ENCODE measurements at regions of chr21 and their contacts with region 1.

Region 1: DNA sequence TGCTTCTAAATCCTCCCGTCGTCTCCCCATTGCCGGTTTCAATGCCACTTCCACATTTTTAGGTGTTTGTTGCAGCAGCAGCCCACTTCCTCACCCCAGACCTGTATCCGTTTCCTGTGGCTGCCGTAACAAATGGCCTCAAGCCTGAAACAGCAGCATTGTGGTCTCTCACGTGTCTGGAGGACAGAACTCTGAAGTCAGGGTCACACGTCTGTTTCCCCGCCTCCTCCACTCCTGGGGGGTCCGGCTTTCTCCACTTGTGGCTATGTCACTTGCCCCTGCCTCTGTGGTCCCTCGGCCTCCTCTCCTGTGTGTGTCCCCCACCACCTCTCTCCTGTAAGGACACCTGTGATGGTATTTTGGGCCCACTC is 21.8 kb downstream of the TRPM2 start:
- DNase-seq: no peak
- ATAC-seq: no peak
- H3K4me3 ChIP-seq: no peak overlapping the region
- H3K27ac ChIP-seq: no peak overlapping the region
- H3K4me1 ChIP-seq: peaks cover 7% of the 10 kb centered on the region
- H3K27me3 ChIP-seq: peaks cover 16 to 46% of the 10 kb centered on the region in 2 experiments
- CTCF ChIP-seq: no peak
- EP300 ChIP-seq: no peak
- POLR2A ChIP-seq: no peak
- RAD21 ChIP-seq: no peak

Region 2: GRCh38 chr21:44428281-44428942 is 53.1 kb after region 1 on chr21:
- CTCF ChIA-PET with region 1: no interaction called
- POLR2A ChIA-PET with region 1: no interaction called
- in situ Hi-C with region 1: loop called (anchors 5 kb)
- intact Hi-C with region 1: no loop called
- DNase-seq: peak; percentile 26
- ATAC-seq: no peak; the same call in 2 of the 3 replicates
- H3K4me3 ChIP-seq: no peak overlapping the region
- H3K27ac ChIP-seq: no peak overlapping the region
- H3K4me1 ChIP-seq: no peaks in the 10 kb centered on the region
- H3K27me3 ChIP-seq: peaks cover 3 to 24% of the 10 kb centered on the region in 2 experiments; a peak in 3 of 5 replicates
- CTCF ChIP-seq: no peak
- EP300 ChIP-seq: no peak
- POLR2A ChIP-seq: no peak
- RAD21 ChIP-seq: no peak

Region 3: GRCh38 chr21:45302078-45303055 is 927.1 kb after region 1 on chr21:
- CTCF ChIA-PET with region 1: no interaction called
- POLR2A ChIA-PET with region 1: no interaction called
- in situ Hi-C with region 1: no loop called
- intact Hi-C with region 1: no loop called
- DNase-seq: no peak
- ATAC-seq: no peak
- H3K4me3 ChIP-seq: no peak overlapping the region
- H3K27ac ChIP-seq: no peak overlapping the region
- H3K4me1 ChIP-seq: peaks cover 43% of the 10 kb centered on the region
- H3K27me3 ChIP-seq: no peaks in the 10 kb centered on the region
- CTCF ChIP-seq: no peak
- EP300 ChIP-seq: no peak
- POLR2A ChIP-seq: no peak
- RAD21 ChIP-seq: no peak